ENCODE measurements at regions of chr7 and their contacts with region 1.

Region 1: DNA sequence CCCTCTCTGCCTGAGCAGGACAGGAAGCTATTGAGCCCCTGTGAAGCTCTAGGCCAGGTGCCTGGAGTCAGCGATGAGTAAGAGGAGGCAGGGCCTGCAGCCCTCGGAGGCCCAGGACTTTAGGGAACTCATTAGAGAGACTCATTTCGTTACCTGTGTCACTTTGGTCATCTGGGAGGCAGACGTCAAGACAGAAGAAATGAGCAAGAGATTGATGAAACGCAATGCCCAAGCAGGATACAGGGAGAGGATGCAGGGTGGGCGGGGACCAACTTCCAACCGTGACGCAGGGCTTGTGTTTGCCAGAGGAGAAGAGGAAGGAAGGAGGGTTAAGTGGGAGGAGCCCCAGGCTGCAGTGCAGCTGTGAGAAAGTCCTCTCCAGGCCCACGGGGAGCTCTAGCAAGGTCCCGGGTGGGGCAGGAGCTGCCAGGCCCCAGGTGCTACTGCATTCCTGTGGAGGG is 26.4 kb upstream of the GNA12 start:
- DNase-seq: peak; percentile 53
- CTCF ChIP-seq: no peak

Region 2: GRCh38 chr7:3103614-3104398 is 233.3 kb after region 1 on chr7:
- in situ Hi-C with region 1: no loop called
- DNase-seq: no peak
- CTCF ChIP-seq: no peak

Region 3: GRCh38 chr7:3154912-3155494 is 284.5 kb after region 1 on chr7:
- in situ Hi-C with region 1: loop called (anchors 5 kb)
- DNase-seq: peak; percentile 71
- CTCF ChIP-seq: peak; percentile 83

Region 4: GRCh38 chr7:3559278-3559677 is 688.8 kb after region 1 on chr7:
- in situ Hi-C with region 1: no loop called
- DNase-seq: no peak
- CTCF ChIP-seq: no peak